Posterior vena cava (tissue), 2 donors: ENCODE measurements at regions of chr9 and their contacts with region 1.

Region 1: DNA sequence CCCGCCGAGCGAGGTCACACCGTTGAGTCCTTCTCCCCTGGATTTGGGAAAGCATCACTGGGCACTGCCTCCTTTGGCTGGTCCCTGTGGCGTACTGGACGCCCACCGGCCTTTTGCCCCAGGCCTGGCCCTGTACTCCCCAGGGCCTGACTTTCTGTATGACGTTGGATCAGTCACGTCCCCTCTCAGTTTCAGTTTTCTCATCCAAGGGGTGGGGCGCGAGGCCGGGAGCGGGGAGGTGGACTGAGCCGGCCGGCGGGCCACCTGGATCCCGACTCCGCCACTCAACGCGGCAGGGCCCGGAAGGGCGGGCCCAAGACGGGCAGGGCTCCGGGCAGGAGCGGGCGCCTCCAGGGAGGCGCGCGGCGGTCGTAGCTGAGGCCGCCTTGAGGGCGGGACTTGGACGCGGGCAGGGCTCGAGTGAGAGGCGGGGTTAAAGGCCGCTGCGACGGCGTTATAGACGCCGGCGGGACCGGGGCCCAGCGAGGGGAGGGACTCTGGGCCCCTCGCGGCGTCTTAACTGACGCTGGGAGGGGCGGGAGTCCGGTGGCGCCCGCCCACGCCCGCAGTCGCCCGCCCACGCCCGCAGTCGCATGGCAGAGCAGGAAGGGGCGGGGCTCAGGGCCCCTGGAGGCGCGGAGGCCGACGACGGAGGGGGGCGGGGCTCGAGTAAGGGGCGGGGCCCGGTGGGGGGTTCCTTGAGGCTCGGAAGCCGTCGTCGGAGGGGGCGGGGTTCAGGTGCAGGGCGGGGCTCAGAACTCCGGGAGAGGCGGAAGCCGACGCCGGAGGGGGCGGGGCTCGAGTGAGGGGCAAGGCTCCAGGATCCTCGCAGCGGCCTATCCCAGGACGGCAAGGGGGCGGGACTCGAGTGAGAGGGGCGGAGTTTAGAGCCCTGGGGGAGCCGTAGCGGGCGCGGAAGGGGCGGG is 549 bp upstream of the CARD19 start:
- DNase-seq: peak; percentile 100

Region 2: GRCh38 chr9:92444841-92445240 is 650.6 kb before region 1 on chr9:
- intact Hi-C with region 1: loop called in 1 of 2 experiments (anchors 5 kb)
- DNase-seq: no peak

Region 3: GRCh38 chr9:94030318-94031179 is 935.1 kb after region 1 on chr9:
- intact Hi-C with region 1: no loop called
- DNase-seq: peak; percentile 96